Dorsolateral prefrontal cortex (tissue), 120 donors: ENCODE measurements at regions of chr4 and their contacts with region 1.

Region 1: GRCh38 chr4:189309836-189310235 is 630.8 kb upstream of the FRG1 start:
- DNase-seq: no peak
- H3K4me3 ChIP-seq: no peak overlapping the region
- H3K27ac ChIP-seq: peak overlapping the region in 1 of 59 donors; percentile 11
- H3K27me3 ChIP-seq: no peaks in the 10 kb centered on the region
- CTCF ChIP-seq: no peak

Region 2: DNA sequence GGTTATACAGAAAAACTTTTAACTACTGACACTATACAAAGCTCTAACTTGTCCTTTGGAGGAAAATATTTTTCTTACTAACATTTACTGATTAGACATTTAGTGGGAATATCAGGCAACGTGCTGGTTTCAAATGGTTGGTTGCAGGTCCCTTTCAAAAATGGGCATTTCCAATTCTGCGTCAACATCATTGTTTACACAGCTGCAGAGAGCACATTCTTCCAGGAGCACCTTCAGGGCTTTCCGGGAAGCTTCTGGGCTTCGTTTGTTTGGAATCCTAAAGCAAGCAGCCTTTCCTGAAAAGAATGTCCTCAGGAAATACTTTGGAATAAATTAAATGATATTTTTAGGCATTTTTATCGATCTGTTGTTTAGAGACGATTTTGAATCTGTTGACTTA is 880.9 kb before region 1 on chr4:
- intact Hi-C with region 1: loop called in 1 of 2 experiments (anchors 5 kb)
- DNase-seq: no peak
- H3K4me3 ChIP-seq: no peak overlapping the region
- H3K27ac ChIP-seq: no peak overlapping the region
- H3K27me3 ChIP-seq: peaks cover 0 to 7% (median 0%) of the 10 kb centered on the region in 45 donors
- CTCF ChIP-seq: no peak